ENCODE measurements at regions of chr11 and their contacts with region 1.

Region 1: DNA sequence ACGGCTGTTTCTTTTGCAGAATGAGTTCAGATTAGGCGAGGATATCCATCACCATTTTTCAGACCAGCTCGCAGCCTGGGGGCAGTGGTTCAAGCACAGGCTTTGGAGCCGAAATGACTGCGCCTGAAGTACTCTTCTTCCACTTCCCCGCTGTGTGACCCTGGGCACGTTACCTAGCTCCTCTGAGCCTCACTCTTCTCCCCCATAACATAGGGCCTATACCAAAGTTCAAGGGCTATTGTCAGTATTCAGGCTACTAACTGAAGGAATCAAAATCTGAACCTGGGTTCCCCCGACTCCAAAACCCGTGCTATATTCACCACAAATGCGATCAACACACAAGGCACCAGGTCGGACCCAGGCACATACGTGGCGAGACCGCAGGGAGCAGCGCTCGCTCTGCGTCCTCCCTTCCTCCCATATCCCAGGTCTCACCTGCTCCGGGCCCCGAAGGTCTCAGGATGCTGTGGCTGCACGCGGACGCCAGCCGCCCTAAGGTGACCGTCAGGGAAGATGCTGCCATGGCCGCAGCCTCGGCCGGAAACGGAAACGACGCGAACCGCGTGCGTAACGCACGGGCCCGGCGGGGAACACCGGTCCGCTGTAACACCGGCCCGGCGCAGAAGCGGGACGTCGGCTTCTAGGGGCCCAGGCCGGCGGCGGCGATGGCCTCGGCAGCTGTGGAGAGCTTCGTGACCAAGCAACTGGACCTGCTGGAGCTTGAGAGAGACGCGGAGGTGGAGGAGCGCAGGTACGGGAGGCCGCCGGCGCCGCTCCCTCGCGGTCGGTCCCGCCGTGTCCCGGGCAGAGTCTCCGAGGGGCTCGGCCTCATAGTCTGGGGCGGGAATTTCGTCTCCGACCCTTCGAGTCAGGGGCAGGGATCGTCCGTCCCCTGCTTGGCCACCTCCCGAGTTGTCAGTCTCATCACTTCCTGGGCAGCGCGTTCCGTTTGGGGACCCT is at the starts of genes IGHMBP2 and MRPL21:
- DNase-seq: no peak
- ATAC-seq: peak; percentile 98
- H3K4me3 ChIP-seq: peak within 1 kb of the TSS; percentile 100
- H3K27ac ChIP-seq: peak within 1 kb of the TSS; percentile 77
- H3K4me1 ChIP-seq: peaks cover 11% of the 10 kb centered on the region
- H3K27me3 ChIP-seq: no peaks in the 10 kb centered on the region
- CTCF ChIP-seq: no peak
- EP300 ChIP-seq: no peak
- POLR2A ChIP-seq: peak; percentile 99
- RAD21 ChIP-seq: no peak
- polyA plus RNA-seq, gene IGHMBP2: 1.4 to 1.6 TPM
- polyA plus RNA-seq, gene MRPL21: 194 to 283 TPM

Region 2: GRCh38 chr11:69050592-69051380 is 147.2 kb after region 1 on chr11:
- CTCF ChIA-PET with region 1: no interaction called
- POLR2A ChIA-PET with region 1: interaction called, 6 read pairs
- RAD21 ChIA-PET with region 1: no interaction called
- SMC1A ChIA-PET with region 1: no interaction called
- in situ Hi-C with region 1: no loop called
- intact Hi-C with region 1: loop called (anchors 5 kb)
- DNase-seq: no peak
- ATAC-seq: no peak
- H3K4me3 ChIP-seq: peak overlapping the region; percentile 55
- H3K27ac ChIP-seq: peak overlapping the region; percentile 68; the same call in 1 of the 2 replicates
- H3K4me1 ChIP-seq: peaks cover 42% of the 10 kb centered on the region
- H3K27me3 ChIP-seq: no peaks in the 10 kb centered on the region
- CTCF ChIP-seq: no peak
- EP300 ChIP-seq: no peak
- POLR2A ChIP-seq: no peak
- RAD21 ChIP-seq: no peak

Region 3: DNA sequence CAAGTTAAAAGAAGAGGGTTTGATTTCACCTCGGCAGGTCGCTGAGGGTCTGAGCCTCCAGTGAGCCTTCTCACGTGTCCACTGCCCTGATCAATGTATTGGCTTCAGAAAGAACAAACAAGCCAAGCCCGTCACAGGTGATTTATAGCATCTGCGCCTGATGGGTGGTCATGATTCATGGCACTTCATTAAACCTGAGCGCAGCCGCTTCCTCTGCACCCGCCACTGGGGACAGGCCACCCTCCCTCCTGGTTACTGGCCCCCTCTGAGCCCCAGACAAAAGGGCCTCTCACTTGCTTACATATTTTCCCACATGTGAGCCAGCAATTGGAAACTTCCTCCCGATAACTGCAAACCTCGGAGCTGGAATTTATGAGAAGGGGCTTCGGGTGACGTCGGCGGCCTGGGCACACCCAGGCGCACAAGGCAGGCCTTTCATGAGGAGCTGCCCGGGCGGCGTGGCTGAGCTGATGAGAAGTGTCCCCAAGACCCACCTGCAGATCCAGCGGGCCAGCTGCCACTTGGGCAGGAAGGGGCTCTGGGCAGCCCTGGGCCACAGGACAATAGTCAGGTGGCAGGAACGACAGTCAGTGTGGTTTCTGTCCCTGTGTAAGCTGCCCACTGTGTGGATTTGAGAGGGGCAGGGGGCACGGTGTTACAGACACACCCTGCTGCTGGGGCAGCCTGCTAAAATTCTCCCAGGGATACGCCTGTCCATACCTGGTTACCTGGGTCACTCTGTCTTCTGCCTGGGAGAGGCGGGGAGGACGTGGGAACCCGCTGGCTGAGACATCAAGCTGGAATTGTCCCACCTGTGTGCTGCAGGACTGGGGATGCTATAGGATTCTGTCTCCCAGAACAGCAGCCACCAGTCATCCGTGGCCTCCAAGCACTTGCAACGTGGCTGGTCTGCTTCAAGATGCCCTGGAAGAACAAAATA is 513.8 kb after region 1 on chr11:
- CTCF ChIA-PET with region 1: no interaction called
- POLR2A ChIA-PET with region 1: no interaction called
- RAD21 ChIA-PET with region 1: no interaction called
- SMC1A ChIA-PET with region 1: no interaction called
- in situ Hi-C with region 1: no loop called
- intact Hi-C with region 1: no loop called
- DNase-seq: no peak
- ATAC-seq: no peak
- H3K4me3 ChIP-seq: no peak overlapping the region
- H3K27ac ChIP-seq: no peak overlapping the region
- H3K4me1 ChIP-seq: no peaks in the 10 kb centered on the region
- H3K27me3 ChIP-seq: no peaks in the 10 kb centered on the region; a peak in 1 of 4 replicates
- CTCF ChIP-seq: no peak
- EP300 ChIP-seq: no peak
- POLR2A ChIP-seq: no peak
- RAD21 ChIP-seq: no peak

Measured in GM12878 (cell line).